Right ventricle myocardium inferior (tissue), 1 donor: ENCODE measurements at regions of chr1 and their contacts with region 1.

Region 1: GRCh38 chr1:32063261-32063681 is 9.5 kb upstream of the TMEM39B start:
- DNase-seq: no peak
- ATAC-seq: peak; percentile 41

Region 2: DNA sequence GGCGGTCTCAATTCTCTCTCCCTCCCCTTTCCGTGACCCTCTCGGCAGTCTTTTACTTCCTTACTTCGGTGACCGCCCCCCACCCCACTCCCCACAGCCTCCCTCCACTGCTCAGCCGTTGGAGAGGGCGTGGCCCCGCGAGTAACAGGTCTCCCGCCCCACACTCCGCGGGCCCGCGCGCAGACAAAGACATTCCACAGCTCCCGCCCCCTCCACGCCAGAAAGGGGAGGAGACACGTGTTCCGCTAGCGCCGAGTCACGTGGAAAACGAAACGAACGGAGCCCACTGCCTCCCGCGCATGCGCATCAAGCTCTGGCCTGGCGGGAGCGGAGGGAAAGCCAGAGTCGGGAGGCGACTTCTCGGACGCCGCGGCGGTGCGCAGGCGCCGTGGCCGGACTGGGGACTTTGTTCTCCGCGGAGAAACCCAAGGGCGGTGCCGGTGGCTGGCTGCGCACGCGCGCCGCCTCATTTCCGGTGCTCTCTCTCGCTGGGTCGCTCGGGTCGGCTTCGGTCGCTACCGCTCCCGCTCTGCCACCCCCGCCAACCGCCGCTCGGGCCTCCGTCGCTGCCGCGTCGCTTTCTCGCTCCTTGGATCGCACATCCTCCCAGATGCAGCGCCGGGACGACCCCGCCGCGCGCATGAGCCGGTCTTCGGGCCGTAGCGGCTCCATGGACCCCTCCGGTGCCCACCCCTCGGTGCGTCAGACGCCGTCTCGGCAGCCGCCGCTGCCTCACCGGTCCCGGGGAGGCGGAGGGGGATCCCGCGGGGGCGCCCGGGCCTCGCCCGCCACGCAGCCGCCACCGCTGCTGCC is 49.7 kb before region 1 on chr1 and contains the start of gene KHDRBS1:
- intact Hi-C with region 1: loop called (anchors 10 kb)
- DNase-seq: peak; percentile 99
- ATAC-seq: peak; percentile 97
- total RNA-seq, gene KHDRBS1: 59.6 TPM

Region 3: DNA sequence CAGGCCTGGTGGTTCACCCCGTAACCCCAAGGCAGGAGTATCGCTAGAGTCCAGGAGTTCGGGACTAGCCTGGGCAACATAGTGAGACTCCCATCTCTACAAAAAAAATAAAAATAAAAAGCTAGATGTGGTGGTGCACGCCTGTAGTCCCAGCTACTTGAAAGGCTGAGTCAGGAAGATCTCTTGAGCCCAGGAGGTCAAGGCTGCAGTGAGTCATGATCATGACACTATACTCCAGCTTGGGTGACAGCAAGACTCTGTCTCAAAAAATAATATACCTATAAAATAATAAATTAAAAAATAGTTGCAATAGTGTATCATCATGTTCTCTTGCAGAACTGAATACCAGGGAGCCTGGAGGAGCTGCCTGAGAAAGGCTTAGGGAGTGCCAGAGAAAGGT is 10.4 kb before region 1 on chr1:
- intact Hi-C with region 1: loop called (anchors 1 kb)
- DNase-seq: no peak
- ATAC-seq: no peak

Region 4: DNA sequence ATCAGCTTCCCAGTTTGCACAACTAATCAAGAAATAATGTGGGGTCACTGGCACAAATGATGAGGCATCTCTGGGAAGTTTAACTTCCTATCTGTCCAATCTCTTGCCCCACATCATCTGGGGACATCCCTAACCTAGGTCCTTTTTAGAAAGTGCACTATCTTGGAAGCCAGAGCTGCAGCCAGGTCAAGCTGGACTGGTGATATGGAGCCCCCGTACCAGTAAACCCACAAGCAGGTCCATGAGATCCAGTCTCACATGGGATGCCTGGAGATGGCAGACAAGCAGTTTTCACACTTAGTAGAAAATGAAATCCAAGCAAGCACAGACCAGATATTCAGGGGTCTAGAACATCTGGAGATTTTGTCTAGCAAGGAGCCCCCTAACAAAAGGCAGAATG is 358.5 kb after region 1 on chr1:
- intact Hi-C with region 1: no loop called
- DNase-seq: no peak
- ATAC-seq: no peak